ENCODE measurements at regions of chr3 and their contacts with region 1.

Region 1: GRCh38 chr3:171328419-171329082 is 131.7 kb downstream of the TNIK start:
- DNase-seq: peak in 8 of 9 donors; percentile 26 to 68 (median 58)
- ATAC-seq: peak; percentile 93
- H3K4me3 ChIP-seq: no peak overlapping the region
- H3K4me3 Mint-ChIP-seq: peak overlapping the region in 9 of 10 donors; percentile 13 to 71 (median 46)
- H3K27ac ChIP-seq: no peak overlapping the region
- H3K27ac Mint-ChIP-seq: peak overlapping the region in 6 of 9 donors; percentile 48 to 83 (median 62)
- H3K4me1 ChIP-seq: peaks cover 12 to 17% of the 10 kb centered on the region in 2 donors
- H3K4me1 Mint-ChIP-seq: peaks cover 20 to 81% (median 71%) of the 10 kb centered on the region in 7 donors
- H3K27me3 ChIP-seq: no peaks in the 10 kb centered on the region
- H3K27me3 Mint-ChIP-seq: no peaks in the 10 kb centered on the region

Region 2: DNA sequence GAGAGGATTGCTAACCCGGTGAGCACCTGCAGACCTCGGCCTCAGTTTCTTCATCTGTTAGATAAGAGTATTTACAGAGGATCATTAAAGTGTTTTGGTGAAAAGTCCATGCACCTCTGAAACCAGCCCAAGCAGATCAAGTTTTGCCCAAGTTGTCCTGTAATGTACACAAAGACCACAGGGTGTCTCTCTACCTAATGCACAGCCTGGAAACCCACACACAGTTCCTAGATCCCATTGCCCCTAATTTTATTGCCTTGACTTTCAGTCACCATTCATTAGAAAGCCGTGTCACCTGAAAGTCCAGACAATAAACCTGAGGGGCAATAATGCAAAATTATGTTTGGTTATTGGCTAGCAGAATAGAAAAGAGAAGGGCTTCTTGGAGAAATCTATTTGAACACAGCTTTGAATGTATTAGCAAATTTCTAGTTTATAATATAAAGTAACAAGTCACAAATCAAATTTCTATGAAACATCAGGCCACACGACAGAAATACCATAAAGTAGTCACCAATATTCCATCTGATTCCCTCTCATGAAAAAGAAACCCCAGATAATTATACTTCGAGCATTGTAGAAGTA is 140.8 kb before region 1 on chr3:
- CTCF ChIA-PET with region 1: interaction called, 10 read pairs
- POLR2A ChIA-PET with region 1: no interaction called
- intact Hi-C with region 1: loop called in 1 of 2 experiments (anchors 1 kb)
- DNase-seq: peak in 5 of 9 donors; percentile 6 to 43 (median 31)
- ATAC-seq: peak; percentile 68
- H3K4me3 ChIP-seq: no peak overlapping the region
- H3K4me3 Mint-ChIP-seq: no peak overlapping the region
- H3K27ac ChIP-seq: no peak overlapping the region
- H3K27ac Mint-ChIP-seq: no peak overlapping the region
- H3K4me1 ChIP-seq: no peaks in the 10 kb centered on the region
- H3K4me1 Mint-ChIP-seq: peaks cover 9 to 50% (median 19%) of the 10 kb centered on the region in 7 donors
- H3K27me3 ChIP-seq: no peaks in the 10 kb centered on the region
- H3K27me3 Mint-ChIP-seq: no peaks in the 10 kb centered on the region

Region 3: GRCh38 chr3:171309906-171310359 is 18.6 kb before region 1 on chr3:
- CTCF ChIA-PET with region 1: interaction called, 10 read pairs
- POLR2A ChIA-PET with region 1: interaction called, 8 read pairs
- intact Hi-C with region 1: loop called in 1 of 2 experiments (anchors 1 kb)
- DNase-seq: no peak
- ATAC-seq: no peak
- H3K4me3 ChIP-seq: no peak overlapping the region
- H3K4me3 Mint-ChIP-seq: peak overlapping the region in 1 of 10 donors; percentile 73
- H3K27ac ChIP-seq: no peak overlapping the region
- H3K27ac Mint-ChIP-seq: peak overlapping the region in 5 of 9 donors; percentile 4 to 75 (median 45)
- H3K4me1 ChIP-seq: peaks cover 0 to 8% of the 10 kb centered on the region in 2 donors
- H3K4me1 Mint-ChIP-seq: peaks cover 35 to 96% (median 88%) of the 10 kb centered on the region in 7 donors
- H3K27me3 ChIP-seq: no peaks in the 10 kb centered on the region
- H3K27me3 Mint-ChIP-seq: no peaks in the 10 kb centered on the region

Region 4: DNA sequence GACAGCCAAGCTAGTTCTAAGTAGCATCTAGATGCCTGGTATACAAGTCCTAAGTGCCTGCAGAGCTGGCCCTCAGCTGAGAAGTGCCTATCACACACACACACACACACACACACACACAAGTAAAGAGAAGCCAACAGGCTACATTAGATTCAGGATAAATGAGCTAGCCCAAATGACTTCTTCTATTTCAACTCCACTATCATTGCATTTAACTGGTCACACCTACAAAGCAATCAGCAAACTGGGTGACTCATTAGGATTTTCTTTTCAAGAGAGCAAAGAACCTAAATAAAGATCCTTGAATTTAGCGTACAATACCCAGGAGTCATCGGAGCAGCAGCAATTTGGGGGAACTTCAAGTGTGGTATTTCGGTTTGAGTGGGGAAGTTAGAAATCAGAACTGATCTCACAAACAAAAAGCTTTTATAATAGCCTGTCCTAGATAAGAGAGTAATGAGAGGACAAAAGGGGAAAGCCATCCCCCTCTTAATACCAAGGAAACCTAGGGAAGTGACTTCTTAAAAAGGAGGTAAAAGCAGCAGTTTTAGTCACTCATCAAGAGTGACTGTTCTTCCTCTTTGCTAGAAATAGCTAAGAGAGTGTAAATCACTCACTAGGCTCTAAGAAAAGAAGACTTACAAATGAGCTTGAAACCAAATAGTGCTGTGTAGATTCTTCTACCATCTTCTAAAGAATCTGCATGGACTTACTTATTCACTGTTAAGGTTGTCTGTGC is 18.9 kb after region 1 on chr3:
- CTCF ChIA-PET with region 1: no interaction called
- POLR2A ChIA-PET with region 1: no interaction called
- intact Hi-C with region 1: loop called in 1 of 2 experiments (anchors 2 kb)
- DNase-seq: no peak
- ATAC-seq: peak; percentile 64
- H3K4me3 ChIP-seq: no peak overlapping the region
- H3K4me3 Mint-ChIP-seq: no peak overlapping the region
- H3K27ac ChIP-seq: no peak overlapping the region
- H3K27ac Mint-ChIP-seq: peak overlapping the region in 3 of 9 donors; percentile 33 to 53 (median 44)
- H3K4me1 ChIP-seq: peaks cover 0 to 5% of the 10 kb centered on the region in 2 donors
- H3K4me1 Mint-ChIP-seq: peaks cover 21 to 89% (median 75%) of the 10 kb centered on the region in 7 donors
- H3K27me3 ChIP-seq: no peaks in the 10 kb centered on the region
- H3K27me3 Mint-ChIP-seq: no peaks in the 10 kb centered on the region

Region 5: GRCh38 chr3:171531716-171532115 is 203.2 kb after region 1 on chr3:
- CTCF ChIA-PET with region 1: no interaction called
- POLR2A ChIA-PET with region 1: no interaction called
- intact Hi-C with region 1: loop called in 1 of 2 experiments (anchors 10 kb)
- DNase-seq: no peak
- ATAC-seq: no peak
- H3K4me3 ChIP-seq: no peak overlapping the region
- H3K4me3 Mint-ChIP-seq: no peak overlapping the region
- H3K27ac ChIP-seq: no peak overlapping the region
- H3K27ac Mint-ChIP-seq: no peak overlapping the region
- H3K4me1 ChIP-seq: no peaks in the 10 kb centered on the region
- H3K4me1 Mint-ChIP-seq: no peaks in the 10 kb centered on the region
- H3K27me3 ChIP-seq: no peaks in the 10 kb centered on the region
- H3K27me3 Mint-ChIP-seq: no peaks in the 10 kb centered on the region

Region 6: DNA sequence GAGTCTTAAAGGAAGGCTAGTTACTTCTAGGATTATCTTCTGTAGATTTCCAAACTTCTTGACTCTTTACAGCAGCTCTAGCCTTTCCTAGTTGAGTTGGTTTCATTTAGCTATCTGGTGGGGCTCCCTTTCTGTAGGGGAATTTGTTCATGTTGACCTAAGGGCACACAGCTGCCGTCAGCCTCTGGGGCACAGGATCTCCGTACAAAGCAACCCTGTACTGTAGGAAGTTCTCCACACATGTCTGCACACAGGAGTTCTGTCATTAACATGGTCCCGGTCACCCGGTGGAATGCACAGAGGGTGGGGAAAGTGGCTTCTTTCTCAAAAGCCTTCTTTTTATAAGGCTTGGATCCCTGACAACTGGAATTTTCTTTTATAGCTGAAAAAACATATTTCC is 220.4 kb after region 1 on chr3:
- CTCF ChIA-PET with region 1: no interaction called
- POLR2A ChIA-PET with region 1: no interaction called
- intact Hi-C with region 1: no loop called
- DNase-seq: no peak
- ATAC-seq: no peak
- H3K4me3 ChIP-seq: no peak overlapping the region
- H3K4me3 Mint-ChIP-seq: no peak overlapping the region
- H3K27ac ChIP-seq: no peak overlapping the region
- H3K27ac Mint-ChIP-seq: no peak overlapping the region
- H3K4me1 ChIP-seq: peaks cover 0 to 4% of the 10 kb centered on the region in 2 donors
- H3K4me1 Mint-ChIP-seq: peaks cover 0 to 12% (median 5%) of the 10 kb centered on the region in 7 donors
- H3K27me3 ChIP-seq: no peaks in the 10 kb centered on the region
- H3K27me3 Mint-ChIP-seq: no peaks in the 10 kb centered on the region

Region 7: GRCh38 chr3:171561596-171562323 is 233.2 kb after region 1 on chr3:
- CTCF ChIA-PET with region 1: interaction called, 4 read pairs
- POLR2A ChIA-PET with region 1: no interaction called
- intact Hi-C with region 1: loop called in 1 of 2 experiments (anchors 5 kb)
- DNase-seq: peak in 1 of 9 donors; percentile 4
- ATAC-seq: no peak
- H3K4me3 ChIP-seq: no peak overlapping the region
- H3K4me3 Mint-ChIP-seq: peak overlapping the region in 4 of 10 donors; percentile 8 to 83 (median 14)
- H3K27ac ChIP-seq: no peak overlapping the region
- H3K27ac Mint-ChIP-seq: peak overlapping the region in 7 of 9 donors; percentile 29 to 97 (median 65)
- H3K4me1 ChIP-seq: peaks cover 1 to 4% of the 10 kb centered on the region in 2 donors
- H3K4me1 Mint-ChIP-seq: peaks cover 8 to 69% (median 16%) of the 10 kb centered on the region in 7 donors
- H3K27me3 ChIP-seq: no peaks in the 10 kb centered on the region
- H3K27me3 Mint-ChIP-seq: no peaks in the 10 kb centered on the region

Measured in naive thymus-derived CD4-positive, alpha-beta T cell (primary cell).